ENCODE measurements at regions of chr1 and their contacts with region 1.

Region 1: DNA sequence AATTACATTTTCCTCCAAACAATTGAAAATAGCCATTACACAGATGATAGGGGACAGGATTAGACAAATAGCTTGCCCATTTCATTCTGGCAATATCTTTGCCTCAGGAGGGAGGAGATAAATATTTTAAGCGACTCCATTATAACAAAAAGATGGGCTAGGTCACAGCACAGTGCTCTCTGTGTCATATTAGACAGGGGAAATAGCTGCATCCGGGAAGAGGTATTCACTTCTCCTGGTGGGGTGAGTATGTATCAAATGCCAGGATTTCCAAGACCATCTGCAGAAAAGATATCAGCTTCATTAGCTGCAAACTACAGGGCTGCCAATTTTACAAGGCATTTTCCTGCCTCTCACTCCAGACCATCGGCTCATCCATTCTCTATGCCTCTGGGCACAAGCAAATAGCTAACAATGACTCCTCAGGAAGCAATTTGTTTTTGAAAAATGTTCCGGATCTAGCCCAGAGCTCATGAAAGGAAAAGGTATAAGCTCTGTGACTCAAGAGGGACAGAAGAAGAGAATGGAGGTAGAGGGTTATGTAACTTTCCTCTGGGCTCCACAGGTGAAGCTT is 41.9 kb upstream of the ANGPTL7 start:
- DNase-seq: peak; percentile 77
- H3K4me3 ChIP-seq: no peak overlapping the region
- H3K27ac ChIP-seq: peak overlapping the region; percentile 29
- H3K4me1 ChIP-seq: peaks cover 59% of the 10 kb centered on the region
- H3K27me3 ChIP-seq: no peaks in the 10 kb centered on the region
- CTCF ChIP-seq: no peak

Region 2: DNA sequence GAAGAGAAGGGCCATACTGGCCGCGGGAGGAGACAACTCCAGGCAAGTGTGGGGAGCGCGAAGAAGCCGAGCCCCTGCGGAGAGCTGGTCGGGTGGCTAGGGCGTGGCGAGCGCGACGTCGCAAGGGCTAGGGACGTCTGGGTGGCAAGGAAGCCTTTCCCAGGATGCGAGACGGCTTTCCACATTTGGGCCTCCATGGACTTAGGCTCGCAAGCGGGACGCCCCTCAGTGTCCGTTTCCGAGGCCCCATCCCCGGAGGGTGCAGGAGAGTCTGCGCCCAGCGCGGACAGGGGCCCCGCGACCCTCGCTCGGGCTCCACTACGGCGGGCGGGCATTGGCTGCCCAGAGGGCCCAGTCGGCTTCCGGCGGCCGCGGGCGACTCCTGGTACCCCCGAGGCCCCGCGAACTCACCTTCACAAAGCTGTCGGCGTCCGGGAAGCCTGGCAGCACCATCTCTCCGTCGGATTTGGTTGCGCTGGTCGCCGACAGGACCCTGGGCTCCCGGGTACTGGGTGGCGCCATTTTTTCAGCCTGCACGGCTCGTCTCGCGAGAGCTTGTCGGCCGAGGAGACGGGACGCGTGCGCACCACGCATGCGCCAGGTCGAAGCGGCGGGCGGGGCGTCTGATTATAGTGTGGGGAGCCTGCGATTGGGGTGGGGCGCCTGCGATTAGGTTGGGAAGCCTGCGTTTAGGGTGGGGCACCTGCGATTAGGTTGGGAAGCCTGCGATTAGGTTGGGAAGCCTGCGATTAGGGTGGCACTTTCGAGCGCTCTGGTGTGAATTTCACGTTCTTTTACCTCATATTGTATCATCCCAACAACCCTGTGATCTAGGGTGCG is 47.8 kb before region 1 on chr1 and contains the start of gene EXOSC10:
- CTCF ChIA-PET with region 1: no interaction called
- dilution Hi-C with region 1: no loop called
- in situ Hi-C with region 1: no loop called
- intact Hi-C with region 1: loop called (anchors 2 kb)
- DNase-seq: peak; percentile 83
- H3K4me3 ChIP-seq: peak within 1 kb of the TSS; percentile 77 to 97 (median 93)
- H3K27ac ChIP-seq: peak within 1 kb of the TSS; percentile 82
- H3K4me1 ChIP-seq: no peaks in the 10 kb centered on the region
- H3K27me3 ChIP-seq: no peaks in the 10 kb centered on the region
- CTCF ChIP-seq: no peak
- total RNA-seq, gene EXOSC10: 62.0 to 66.6 TPM

Region 3: GRCh38 chr1:11158720-11159321 is 11.5 kb after region 1 on chr1:
- CTCF ChIA-PET with region 1: interaction called, 7 read pairs
- dilution Hi-C with region 1: no loop called
- in situ Hi-C with region 1: no loop called
- intact Hi-C with region 1: loop called (anchors 1 kb)
- DNase-seq: peak; percentile 89
- H3K4me3 ChIP-seq: no peak overlapping the region
- H3K27ac ChIP-seq: peak overlapping the region; percentile 79
- H3K4me1 ChIP-seq: peaks cover 22% of the 10 kb centered on the region
- H3K27me3 ChIP-seq: no peaks in the 10 kb centered on the region
- CTCF ChIP-seq: no peak

Region 4: DNA sequence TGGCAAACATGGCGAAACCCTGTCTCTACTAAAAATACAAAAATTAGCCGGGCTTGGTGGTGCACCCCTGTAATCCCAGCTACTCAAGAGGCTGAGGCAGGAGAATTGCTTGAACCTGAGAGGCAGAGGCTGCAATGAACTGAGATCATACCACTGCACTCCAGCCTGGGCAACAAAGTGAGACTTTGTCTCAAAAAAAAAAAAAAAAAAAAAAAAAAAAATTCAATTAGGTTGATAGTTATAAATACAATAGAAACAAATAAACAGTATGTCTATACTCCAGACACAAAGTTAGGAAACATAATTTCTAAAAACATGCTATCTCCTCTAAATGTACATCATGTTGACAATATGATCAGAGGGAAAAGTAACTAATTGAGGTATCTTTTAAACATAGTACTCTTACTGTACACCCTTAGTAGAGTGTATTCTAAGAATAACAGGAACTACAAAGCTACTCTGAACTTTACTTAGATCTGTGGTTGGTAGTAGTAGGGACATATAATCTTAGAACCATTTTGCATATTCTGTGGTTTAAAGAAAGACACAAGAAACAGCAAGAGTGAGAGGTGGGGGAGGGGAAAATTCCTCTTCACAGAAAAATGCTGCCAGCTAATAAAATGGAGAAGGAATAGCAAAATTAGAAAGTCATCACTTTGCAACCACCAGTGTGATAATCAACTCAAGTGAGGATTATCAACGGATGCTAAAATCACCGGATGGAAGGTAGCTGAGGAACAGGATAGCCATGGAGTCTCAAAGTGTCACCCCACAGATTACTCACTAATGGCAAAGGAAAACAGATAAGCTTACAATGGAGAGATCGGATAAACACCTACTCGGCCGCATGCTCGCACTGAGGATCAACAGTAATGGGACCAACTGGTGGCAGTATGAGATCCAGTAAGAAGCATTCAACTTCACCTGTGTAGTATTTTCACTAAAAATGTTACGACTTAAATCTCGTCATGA is 80.1 kb after region 1 on chr1:
- CTCF ChIA-PET with region 1: no interaction called
- dilution Hi-C with region 1: loop called (anchors 5 kb)
- in situ Hi-C with region 1: no loop called
- intact Hi-C with region 1: no loop called
- DNase-seq: no peak
- H3K4me3 ChIP-seq: no peak overlapping the region
- H3K27ac ChIP-seq: no peak overlapping the region
- H3K4me1 ChIP-seq: no peaks in the 10 kb centered on the region
- H3K27me3 ChIP-seq: no peaks in the 10 kb centered on the region
- CTCF ChIP-seq: no peak

Region 5: GRCh38 chr1:11301601-11302000 is 154.3 kb after region 1 on chr1:
- CTCF ChIA-PET with region 1: no interaction called
- dilution Hi-C with region 1: no loop called
- in situ Hi-C with region 1: no loop called
- intact Hi-C with region 1: no loop called
- DNase-seq: no peak
- H3K4me3 ChIP-seq: no peak overlapping the region
- H3K27ac ChIP-seq: no peak overlapping the region
- H3K4me1 ChIP-seq: no peaks in the 10 kb centered on the region
- H3K27me3 ChIP-seq: no peaks in the 10 kb centered on the region
- CTCF ChIP-seq: no peak